ENCODE measurements at regions of chr7 and their contacts with region 1.

Region 1: DNA sequence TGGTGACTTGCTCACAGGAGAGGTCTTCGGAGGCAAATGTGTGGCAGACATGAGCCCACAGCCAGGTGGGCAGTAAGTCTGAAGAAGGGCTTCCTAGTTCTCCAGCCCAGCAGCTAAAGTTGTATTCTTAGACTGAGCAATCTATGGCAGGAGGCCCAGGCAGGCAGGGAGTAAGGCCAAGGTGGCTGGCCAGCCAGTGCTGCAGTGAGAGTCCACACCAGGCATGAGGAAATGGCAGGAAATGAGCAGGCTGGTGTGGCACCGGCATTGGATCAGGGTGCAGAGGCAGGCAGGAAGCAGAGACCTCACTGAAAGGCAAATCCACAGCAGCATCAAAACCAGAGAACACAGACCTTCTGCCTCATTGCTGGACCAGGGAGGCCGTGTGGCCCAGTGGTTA is 84.6 kb upstream of the PDE1C start:
- DNase-seq: peak; percentile 74
- ATAC-seq: peak; percentile 86 to 92

Region 2: GRCh38 chr7:32070406-32071360 is 84.1 kb before region 1 on chr7 and contains the start of gene PDE1C:
- intact Hi-C with region 1: loop called in 1 of 2 experiments (anchors 5 kb)
- DNase-seq: peak; percentile 67
- ATAC-seq: peak; percentile 92 to 93
- total RNA-seq, gene PDE1C: 44.2 to 50.8 TPM

Region 3: DNA sequence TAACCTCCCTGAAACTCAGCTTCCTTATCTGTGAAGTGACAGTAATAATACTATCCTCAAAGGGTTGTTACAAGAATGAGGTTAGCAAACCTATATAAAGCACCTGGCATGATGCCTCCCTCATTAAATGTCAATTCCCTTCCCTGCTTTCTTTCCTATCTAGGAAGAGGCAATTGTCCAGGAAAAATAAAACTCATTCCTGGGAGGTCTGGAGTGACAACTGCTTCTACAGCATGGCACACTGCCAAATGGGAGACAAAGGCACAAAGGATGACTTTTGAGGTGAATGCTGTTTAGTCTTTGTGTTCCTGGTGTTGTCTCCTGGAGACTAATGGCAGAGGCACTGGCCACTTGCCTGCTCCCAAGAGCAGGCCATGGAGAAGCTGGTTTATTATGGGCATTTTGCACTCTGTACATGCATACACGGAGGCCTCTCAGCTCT is 52.3 kb before region 1 on chr7:
- intact Hi-C with region 1: loop called in 1 of 2 experiments (anchors 5 kb)
- DNase-seq: peak; percentile 45
- ATAC-seq: peak in 1 of 2 donors; percentile 59